Panc1 (cell line): ENCODE measurements at regions of chr11 and their contacts with region 1.

Region 1: GRCh38 chr11:30855383-30856006 is 269.3 kb upstream of the MPPED2 start:
- DNase-seq: peak; percentile 1
- ATAC-seq: no peak
- H3K4me3 ChIP-seq: no peak overlapping the region
- H3K27ac ChIP-seq: no peak overlapping the region
- H3K4me1 ChIP-seq: no peaks in the 10 kb centered on the region
- H3K27me3 ChIP-seq: no peaks in the 10 kb centered on the region
- CTCF ChIP-seq: peak; percentile 41; the same call in 1 of the 2 replicates

Region 2: GRCh38 chr11:30617771-30618170 is 237.7 kb before region 1 on chr11:
- CTCF ChIA-PET with region 1: no interaction called
- POLR2A ChIA-PET with region 1: no interaction called
- in situ Hi-C with region 1: no loop called
- intact Hi-C with region 1: loop called (anchors 10 kb)
- DNase-seq: no peak
- ATAC-seq: no peak
- H3K4me3 ChIP-seq: no peak overlapping the region
- H3K27ac ChIP-seq: no peak overlapping the region
- H3K4me1 ChIP-seq: no peaks in the 10 kb centered on the region
- H3K27me3 ChIP-seq: no peaks in the 10 kb centered on the region
- CTCF ChIP-seq: no peak